Breast epithelium (tissue), 4 donors: ENCODE measurements at regions of chr9 and their contacts with region 1.

Region 1: DNA sequence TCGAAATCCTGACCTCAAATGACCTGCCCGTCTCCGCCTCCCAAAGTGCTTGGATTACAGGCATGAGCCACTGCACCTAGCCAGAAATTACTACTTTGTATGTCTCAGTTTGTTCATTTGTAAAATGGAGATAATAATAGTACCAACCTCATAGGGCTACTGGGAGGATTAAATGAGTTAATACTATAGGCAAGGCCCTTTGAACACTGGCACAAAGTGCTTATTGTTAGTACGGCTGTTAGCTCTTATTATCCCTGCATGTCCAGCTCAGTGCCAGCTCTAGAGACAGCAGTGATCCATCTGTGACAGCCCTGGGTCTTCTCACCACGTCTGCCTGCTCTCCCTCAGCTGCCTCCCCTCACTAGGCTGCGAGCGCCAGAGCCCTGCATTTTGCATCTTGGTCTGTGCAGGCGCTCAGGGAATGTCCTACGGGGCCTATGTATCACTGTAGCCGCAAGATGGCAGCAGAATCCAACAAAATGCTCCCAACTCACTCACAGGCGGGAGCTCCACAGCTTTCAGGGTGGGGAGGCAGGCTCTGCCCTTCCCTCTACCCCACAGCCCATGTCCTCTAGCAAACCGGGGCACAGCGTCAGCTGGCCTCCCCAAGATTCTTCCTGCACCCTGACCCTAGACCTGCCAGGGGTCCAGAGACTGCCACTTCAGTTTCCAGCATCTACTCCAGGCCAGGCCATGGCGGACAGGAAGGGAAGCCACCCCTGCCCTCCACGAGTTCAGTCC is 17.7 kb upstream of the AKNA start:
- DNase-seq: peak; percentile 61 to 62
- H3K4me3 ChIP-seq: no peak overlapping the region
- H3K27ac ChIP-seq: no peak overlapping the region
- H3K4me1 ChIP-seq: no peaks in the 10 kb centered on the region
- H3K27me3 ChIP-seq: no peaks in the 10 kb centered on the region
- CTCF ChIP-seq: peak; percentile 13 to 70 (median 68)
- POLR2A ChIP-seq: no peak

Region 2: GRCh38 chr9:113255438-113255837 is 1150.0 kb before region 1 on chr9:
- intact Hi-C with region 1: loop called (anchors 5 kb)
- DNase-seq: no peak
- H3K4me3 ChIP-seq: no peak overlapping the region
- H3K27ac ChIP-seq: no peak overlapping the region
- H3K4me1 ChIP-seq: no peaks in the 10 kb centered on the region
- H3K27me3 ChIP-seq: no peaks in the 10 kb centered on the region
- CTCF ChIP-seq: no peak
- POLR2A ChIP-seq: no peak

Region 3: DNA sequence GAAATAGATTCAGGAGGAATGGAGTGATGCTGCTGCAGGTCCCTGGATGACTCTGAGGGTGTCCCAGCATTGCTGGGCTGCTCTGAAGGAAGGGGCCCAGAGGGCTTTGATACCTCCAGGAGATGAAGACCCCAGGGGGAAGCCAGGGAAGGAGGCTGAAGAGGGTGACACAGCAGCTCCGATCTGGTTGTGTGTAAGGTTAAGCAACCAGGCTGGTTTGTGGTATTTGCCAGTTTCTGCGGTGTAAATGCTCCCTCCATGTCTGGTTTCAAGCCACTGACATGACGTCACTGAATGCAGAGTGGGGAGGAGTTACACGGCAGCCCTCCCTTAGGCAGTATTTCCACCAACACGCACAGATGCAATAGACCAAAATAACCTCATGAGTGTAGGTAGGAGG is 122.5 kb before region 1 on chr9:
- intact Hi-C with region 1: no loop called
- DNase-seq: no peak
- H3K4me3 ChIP-seq: no peak overlapping the region
- H3K27ac ChIP-seq: no peak overlapping the region
- H3K4me1 ChIP-seq: no peaks in the 10 kb centered on the region
- H3K27me3 ChIP-seq: no peaks in the 10 kb centered on the region
- CTCF ChIP-seq: no peak
- POLR2A ChIP-seq: no peak

Region 4: GRCh38 chr9:114343476-114344187 is 61.8 kb before region 1 on chr9:
- intact Hi-C with region 1: loop called (anchors 2 kb)
- DNase-seq: no peak
- H3K4me3 ChIP-seq: no peak overlapping the region
- H3K27ac ChIP-seq: no peak overlapping the region
- H3K4me1 ChIP-seq: no peaks in the 10 kb centered on the region
- H3K27me3 ChIP-seq: no peaks in the 10 kb centered on the region
- CTCF ChIP-seq: no peak
- POLR2A ChIP-seq: no peak

Region 5: GRCh38 chr9:114372921-114373448 is 32.5 kb before region 1 on chr9:
- intact Hi-C with region 1: no loop called
- DNase-seq: peak in 1 of 2 donors; percentile 64
- H3K4me3 ChIP-seq: no peak overlapping the region
- H3K27ac ChIP-seq: peak overlapping the region; percentile 79 to 90
- H3K4me1 ChIP-seq: peaks cover 0 to 12% of the 10 kb centered on the region in 2 donors
- H3K27me3 ChIP-seq: no peaks in the 10 kb centered on the region
- CTCF ChIP-seq: no peak
- POLR2A ChIP-seq: no peak

Region 6: DNA sequence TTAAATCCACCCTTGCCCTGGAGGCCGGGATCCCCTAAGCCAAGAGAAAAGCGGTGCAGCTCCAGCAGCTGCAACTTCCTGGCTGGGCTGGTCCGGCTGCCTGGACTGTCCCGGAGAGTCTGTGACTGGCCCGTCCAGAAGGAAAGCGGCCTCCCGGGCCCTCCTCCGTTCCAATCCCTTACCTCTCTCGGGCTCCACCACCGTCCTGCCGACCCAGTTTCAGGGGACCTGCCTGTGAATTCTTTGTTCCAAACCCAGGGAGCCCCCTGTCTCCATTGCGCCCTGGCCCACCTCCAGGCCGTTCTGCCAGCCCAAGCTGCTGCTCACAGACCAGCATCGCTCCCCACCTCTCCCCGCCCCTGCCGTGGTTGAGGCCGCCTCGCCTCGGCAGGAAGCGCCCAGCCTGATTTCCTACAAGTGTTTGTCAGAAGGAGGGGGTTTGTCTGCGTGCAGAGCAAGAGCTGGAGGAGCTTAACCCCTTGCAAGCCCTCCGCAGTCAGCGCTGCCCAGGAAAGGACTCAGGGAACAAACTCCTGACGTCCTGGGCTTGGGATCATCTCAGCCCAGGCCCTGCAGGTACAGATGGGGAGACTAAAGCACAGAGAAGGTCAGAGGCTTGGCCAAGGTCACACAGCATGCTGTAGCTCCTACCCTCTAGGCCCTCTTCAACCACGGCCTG is 17.6 kb before region 1 on chr9 and contains the start of gene AKNA:
- intact Hi-C with region 1: loop called (anchors 1 kb)
- DNase-seq: peak; percentile 64 to 67
- H3K4me3 ChIP-seq: peak within 1 kb of the TSS; percentile 50 to 77 (median 51)
- H3K27ac ChIP-seq: peak within 1 kb of the TSS; percentile 87 to 97
- H3K4me1 ChIP-seq: peaks cover 12 to 21% of the 10 kb centered on the region in 2 donors
- H3K27me3 ChIP-seq: no peaks in the 10 kb centered on the region
- CTCF ChIP-seq: no peak
- POLR2A ChIP-seq: peak; percentile 29
- total RNA-seq, gene AKNA: 20.1 to 52.0 (median 35.7) TPM